ENCODE measurements at regions of chr12 and their contacts with region 1.

Region 1: DNA sequence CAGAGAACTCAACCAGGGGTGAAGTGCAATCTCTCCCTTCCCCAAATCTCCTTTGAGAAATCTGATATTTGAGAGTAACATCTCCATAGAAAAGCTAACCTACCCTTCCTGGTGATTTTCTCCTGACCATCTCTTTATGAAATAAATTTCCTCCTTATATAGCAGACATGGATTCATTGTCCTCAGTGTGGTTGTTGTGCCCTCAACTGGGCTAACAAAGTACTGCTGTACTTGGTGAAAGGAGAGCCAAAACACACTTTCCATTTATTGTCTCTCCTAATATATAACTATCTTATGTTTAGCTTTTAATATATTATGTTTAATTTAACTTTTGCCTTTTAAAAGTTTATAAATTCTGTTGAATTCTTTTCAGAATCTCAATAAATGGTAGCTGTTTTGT is 65.1 kb upstream of the SLCO1B1 start:
- DNase-seq: peak in 1 of 2 experiments; percentile 33
- H3K4me3 ChIP-seq: no peak overlapping the region
- H3K4me3 Mint-ChIP-seq: no peak overlapping the region
- H3K27ac Mint-ChIP-seq: no peak overlapping the region
- H3K4me1 ChIP-seq: no peaks in the 10 kb centered on the region
- H3K4me1 Mint-ChIP-seq: no peaks in the 10 kb centered on the region
- H3K27me3 ChIP-seq: no peaks in the 10 kb centered on the region
- H3K27me3 Mint-ChIP-seq: peaks cover 10% of the 10 kb centered on the region
- CTCF ChIP-seq: peak; percentile 41 to 64

Region 2: DNA sequence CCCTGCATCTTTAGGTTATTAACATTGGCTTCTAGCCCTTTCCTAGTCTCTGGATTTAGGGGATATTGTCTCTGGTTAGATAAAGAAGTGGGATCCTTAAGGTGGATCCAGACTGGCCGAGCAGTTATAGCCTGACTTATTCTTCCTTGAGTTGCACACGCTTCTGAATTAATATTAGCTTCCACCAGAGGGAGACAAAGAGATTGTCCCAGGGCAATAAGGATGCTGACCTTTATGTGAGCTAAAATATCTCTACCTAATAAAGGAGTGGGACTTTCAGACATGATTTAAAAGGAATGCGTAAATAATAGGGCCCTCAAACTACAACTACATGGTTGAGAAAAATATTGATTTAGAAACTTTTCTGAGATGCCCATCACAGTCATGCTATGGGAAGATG is 115.6 kb before region 1 on chr12:
- CTCF ChIA-PET with region 1: interaction called, 4 read pairs
- POLR2A ChIA-PET with region 1: no interaction called
- intact Hi-C with region 1: loop called (anchors 1 kb)
- DNase-seq: peak in 1 of 2 experiments; percentile 57
- H3K4me3 ChIP-seq: no peak overlapping the region
- H3K4me3 Mint-ChIP-seq: no peak overlapping the region
- H3K27ac Mint-ChIP-seq: no peak overlapping the region
- H3K4me1 ChIP-seq: peaks cover 1% of the 10 kb centered on the region; the same call in 1 of the 2 replicates
- H3K4me1 Mint-ChIP-seq: peaks cover 4% of the 10 kb centered on the region
- H3K27me3 ChIP-seq: no peaks in the 10 kb centered on the region
- H3K27me3 Mint-ChIP-seq: peaks cover 4% of the 10 kb centered on the region
- CTCF ChIP-seq: peak; percentile 61 to 76

Region 3: DNA sequence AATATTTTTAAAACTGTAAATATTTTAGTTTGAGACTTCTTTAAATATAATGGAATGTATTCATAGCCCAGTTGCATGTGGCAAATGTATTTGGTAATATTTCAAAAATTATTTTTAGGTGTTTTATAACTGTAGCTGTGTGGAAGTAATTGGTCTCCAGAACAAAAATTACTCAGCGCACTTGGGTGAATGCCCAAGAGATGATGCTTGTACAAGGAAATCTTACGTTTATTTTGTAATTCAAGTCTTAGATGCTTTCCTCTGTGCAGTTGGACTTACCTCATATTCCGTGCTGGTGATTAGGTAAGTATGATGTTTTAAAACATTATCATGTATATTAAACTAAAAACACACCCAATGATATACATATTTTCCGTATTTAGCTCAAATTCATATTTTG is 11.5 kb before region 1 on chr12:
- CTCF ChIA-PET with region 1: no interaction called
- POLR2A ChIA-PET with region 1: no interaction called
- intact Hi-C with region 1: no loop called
- DNase-seq: no peak
- H3K4me3 ChIP-seq: no peak overlapping the region
- H3K4me3 Mint-ChIP-seq: no peak overlapping the region
- H3K27ac Mint-ChIP-seq: no peak overlapping the region
- H3K4me1 ChIP-seq: no peaks in the 10 kb centered on the region
- H3K4me1 Mint-ChIP-seq: no peaks in the 10 kb centered on the region
- H3K27me3 ChIP-seq: no peaks in the 10 kb centered on the region
- H3K27me3 Mint-ChIP-seq: peaks cover 3% of the 10 kb centered on the region
- CTCF ChIP-seq: no peak

Measured in Caco-2 (cell line).